A673 (cell line): ENCODE measurements at regions of chr9 and their contacts with region 1.

Region 1: DNA sequence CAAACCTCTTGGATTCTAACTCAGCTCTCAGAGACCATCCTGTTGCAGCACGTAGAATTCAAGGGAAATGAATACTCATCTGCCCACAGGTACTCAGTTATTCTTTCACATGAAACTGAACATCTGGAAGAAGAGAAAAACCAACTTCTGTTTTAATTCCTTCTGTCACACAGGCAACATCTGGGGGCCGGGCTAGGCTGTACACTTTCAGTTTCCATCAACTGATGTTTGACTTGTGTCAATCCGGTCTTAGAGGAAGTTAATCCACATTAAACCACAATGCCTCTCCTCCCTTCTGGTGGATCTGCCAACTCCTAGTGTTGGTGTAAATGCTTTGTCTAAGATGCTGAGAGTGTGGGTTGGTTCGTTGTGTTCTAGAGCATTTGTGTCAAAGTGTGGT is 17.6 kb downstream of the DMRT3 start:
- DNase-seq: no peak
- H3K4me3 ChIP-seq: no peak overlapping the region
- H3K27ac ChIP-seq: no peak overlapping the region
- H3K4me1 ChIP-seq: no peaks in the 10 kb centered on the region
- H3K27me3 ChIP-seq: peaks cover 62% of the 10 kb centered on the region
- CTCF ChIP-seq: no peak

Region 2: DNA sequence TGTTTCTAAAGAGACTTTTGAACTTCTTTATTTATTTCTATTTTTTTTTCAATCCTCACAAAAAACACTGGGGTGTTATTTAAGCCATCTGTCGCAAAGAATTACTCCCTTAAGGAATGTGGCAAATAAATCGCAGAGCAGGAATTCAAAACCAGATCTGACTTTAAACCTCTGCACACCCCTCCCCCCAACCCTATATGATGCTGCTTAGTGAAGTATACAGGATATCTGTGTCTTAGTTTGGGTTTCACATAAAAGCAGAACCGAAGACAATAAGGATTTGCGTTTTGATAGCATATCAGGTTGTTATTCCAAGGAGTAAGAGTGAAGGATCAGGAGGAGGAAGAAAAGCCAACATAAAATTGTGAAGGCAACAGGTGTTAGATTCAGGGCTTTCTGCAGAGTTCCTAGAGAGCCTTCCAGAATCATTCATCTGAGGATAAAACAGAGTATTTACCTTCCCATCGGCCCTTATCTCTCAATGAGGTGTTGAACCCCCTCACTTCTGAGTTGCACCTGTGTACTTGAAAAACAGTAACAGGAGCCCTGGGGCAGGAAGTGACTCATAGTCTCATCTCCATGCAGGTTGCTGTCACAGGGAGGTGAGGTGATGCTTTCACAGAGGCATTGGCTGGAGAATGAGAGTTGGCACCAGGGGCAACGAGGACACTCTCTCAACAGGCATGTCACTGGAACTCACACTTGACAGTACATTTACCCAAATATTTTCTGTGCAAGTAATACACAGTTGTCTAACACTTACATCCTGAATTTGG is 51.0 kb before region 1 on chr9:
- CTCF ChIA-PET with region 1: interaction called, 18 read pairs
- POLR2A ChIA-PET with region 1: no interaction called
- intact Hi-C with region 1: no loop called
- DNase-seq: no peak
- H3K4me3 ChIP-seq: no peak overlapping the region
- H3K27ac ChIP-seq: no peak overlapping the region
- H3K4me1 ChIP-seq: no peaks in the 10 kb centered on the region
- H3K27me3 ChIP-seq: peaks cover 24% of the 10 kb centered on the region
- CTCF ChIP-seq: no peak